H1 (cell line): ENCODE measurements at regions of chr19 and their contacts with region 1.

Region 1: GRCh38 chr19:34171877-34172660 is at the start of gene LSM14A:
- DNase-seq: peak; percentile 61 to 94
- H3K4me3 ChIP-seq: peak within 1 kb of the TSS; percentile 73 to 94 (median 90)
- H3K27ac ChIP-seq: peak within 1 kb of the TSS; percentile 99
- H3K4me1 ChIP-seq: peaks cover 0 to 6% (median 4%) of the 10 kb centered on the region in 4 experiments; a peak in 5 of 7 replicates
- H3K27me3 ChIP-seq: no peaks in the 10 kb centered on the region
- CTCF ChIP-seq: no peak
- EP300 ChIP-seq: no peak
- POLR2A ChIP-seq: peak; percentile 93 to 99
- RAD21 ChIP-seq: no peak
- total RNA-seq, gene LSM14A: 190 and 195 TPM in 2 replicates

Region 2: GRCh38 chr19:33795370-33796163 is 376.5 kb before region 1 on chr19:
- CTCF ChIA-PET with region 1: no interaction called
- POLR2A ChIA-PET with region 1: interaction called, 17 read pairs
- DNase-seq: peak in 1 of 2 experiments; percentile 90
- H3K4me3 ChIP-seq: peak overlapping the region; percentile 40 to 91 (median 58)
- H3K27ac ChIP-seq: peak overlapping the region; percentile 92
- H3K4me1 ChIP-seq: peaks cover 7 to 18% (median 16%) of the 10 kb centered on the region in 4 experiments
- H3K27me3 ChIP-seq: no peaks in the 10 kb centered on the region; a peak in 2 of 7 replicates
- CTCF ChIP-seq: peak; percentile 57 to 93 (median 61)
- EP300 ChIP-seq: peak in 1 of 2 experiments; percentile 96; a peak in 1 of 3 replicates
- POLR2A ChIP-seq: peak; percentile 61 to 76
- RAD21 ChIP-seq: peak; percentile 34 to 69; a peak in 3 of 4 replicates

Region 3: GRCh38 chr19:33921165-33921564 is 250.9 kb before region 1 on chr19:
- CTCF ChIA-PET with region 1: no interaction called
- POLR2A ChIA-PET with region 1: no interaction called
- DNase-seq: no peak
- H3K4me3 ChIP-seq: no peak overlapping the region
- H3K27ac ChIP-seq: no peak overlapping the region
- H3K4me1 ChIP-seq: no peaks in the 10 kb centered on the region
- H3K27me3 ChIP-seq: no peaks in the 10 kb centered on the region
- CTCF ChIP-seq: no peak
- EP300 ChIP-seq: no peak
- POLR2A ChIP-seq: no peak
- RAD21 ChIP-seq: no peak

Region 4: DNA sequence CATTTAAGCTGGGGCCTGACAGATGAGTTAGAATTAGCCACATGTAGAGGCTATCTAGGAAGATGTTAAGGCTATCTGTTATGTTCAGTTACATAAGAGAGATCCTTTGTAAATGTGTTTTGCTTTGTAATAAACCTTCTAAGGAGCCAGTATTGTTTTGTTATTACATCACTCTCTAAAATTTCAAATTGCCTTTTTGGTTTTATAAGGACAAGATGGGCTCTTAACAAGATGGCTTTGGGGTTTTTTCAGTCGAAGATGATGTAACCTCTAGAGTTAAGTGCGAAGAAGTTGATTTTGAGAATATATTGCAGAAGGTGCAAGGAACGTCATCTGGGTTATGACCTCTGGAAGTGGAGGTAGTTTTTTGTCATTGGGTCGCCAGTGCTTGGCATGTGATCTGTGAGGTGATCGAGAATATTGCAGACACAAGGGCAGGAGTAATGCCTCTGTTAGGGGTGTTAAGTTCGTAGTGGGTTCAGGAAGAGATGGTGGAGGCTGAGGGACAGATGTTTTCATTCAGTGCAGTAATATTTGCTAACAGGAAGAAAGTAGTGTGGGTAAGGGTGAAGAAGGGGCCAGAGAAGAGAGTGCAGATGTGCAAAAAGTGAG is 12.9 kb after region 1 on chr19:
- CTCF ChIA-PET with region 1: interaction called, 7 read pairs
- POLR2A ChIA-PET with region 1: interaction called, 34 read pairs
- DNase-seq: peak in 1 of 2 experiments; percentile 22
- H3K4me3 ChIP-seq: no peak overlapping the region
- H3K27ac ChIP-seq: no peak overlapping the region
- H3K4me1 ChIP-seq: peaks cover 0 to 4% (median 0%) of the 10 kb centered on the region in 4 experiments; a peak in 2 of 7 replicates
- H3K27me3 ChIP-seq: no peaks in the 10 kb centered on the region
- CTCF ChIP-seq: no peak
- EP300 ChIP-seq: no peak
- POLR2A ChIP-seq: no peak
- RAD21 ChIP-seq: no peak